ENCODE measurements at regions of chr16 and their contacts with region 1.

Region 1: GRCh38 chr16:1543085-1543896 is 9.8 kb downstream of the TMEM204 start:
- DNase-seq: peak; percentile 81 to 86
- ATAC-seq: peak; percentile 36 to 81 (median 66)
- H3K4me3 ChIP-seq: peak overlapping the region in 4 of 10 donors; percentile 0 to 25 (median 4)
- H3K27ac ChIP-seq: peak overlapping the region; percentile 16 to 99 (median 96)
- H3K4me1 ChIP-seq: peaks cover 68 to 100% (median 96%) of the 10 kb centered on the region in 9 donors
- H3K27me3 ChIP-seq: no peaks in the 10 kb centered on the region
- CTCF ChIP-seq: peak in 4 of 9 donors; percentile 13 to 22 (median 15)

Region 2: DNA sequence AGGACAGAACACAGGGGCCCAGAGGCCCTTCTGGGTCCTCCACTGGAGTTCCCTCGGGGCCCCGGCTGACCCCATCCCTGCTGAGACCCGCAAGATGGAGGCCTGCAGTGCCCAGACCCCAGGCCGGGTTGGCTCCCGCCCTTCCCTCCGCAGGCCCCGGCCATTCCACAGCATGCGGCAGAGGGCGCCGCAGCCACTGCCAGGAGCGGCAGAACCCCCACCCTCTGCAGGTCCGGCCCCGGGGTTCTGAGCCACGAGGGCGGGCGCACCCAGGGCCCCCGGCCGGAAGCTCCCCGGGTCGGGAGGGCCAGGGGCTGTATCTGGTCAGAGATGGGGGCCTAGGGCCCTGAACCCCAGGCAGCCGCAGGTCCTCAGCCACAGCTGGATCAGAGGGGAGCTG is 114.8 kb before region 1 on chr16:
- intact Hi-C with region 1: loop called in 1 of 10 experiments (anchors 10 kb)
- DNase-seq: peak in 1 of 2 donors; percentile 56
- ATAC-seq: peak; percentile 29 to 66 (median 56)
- H3K4me3 ChIP-seq: peak overlapping the region in 7 of 10 donors; percentile 5 to 49 (median 22)
- H3K27ac ChIP-seq: peak overlapping the region in 2 of 10 donors; percentile 50 to 56
- H3K4me1 ChIP-seq: peaks cover 0 to 16% (median 6%) of the 10 kb centered on the region in 9 donors
- H3K27me3 ChIP-seq: peaks cover 0 to 5% (median 0%) of the 10 kb centered on the region in 7 donors
- CTCF ChIP-seq: peak; percentile 15 to 69 (median 48)

Region 3: GRCh38 chr16:2033057-2033908 is 490.0 kb after region 1 on chr16:
- intact Hi-C with region 1: loop called in 1 of 10 experiments (anchors 10 kb)
- DNase-seq: peak; percentile 79 to 81
- ATAC-seq: peak; percentile 23 to 73 (median 56)
- H3K4me3 ChIP-seq: peak overlapping the region; percentile 52 to 94 (median 81)
- H3K27ac ChIP-seq: peak overlapping the region; percentile 88 to 98 (median 95)
- H3K4me1 ChIP-seq: peaks cover 31 to 94% (median 80%) of the 10 kb centered on the region in 9 donors
- H3K27me3 ChIP-seq: peaks cover 0 to 6% (median 0%) of the 10 kb centered on the region in 7 donors
- CTCF ChIP-seq: no peak

Measured in heart right ventricle (tissue), 16 donors.